Activated T-helper 1 cell treated with anti-CD3 and anti-CD28 coated beads, Interleukin-12 subunit alpha, Interleukin-12 subunit beta, Interleukin-2, Interleukin-4 antibody, amounts not matched to agents 30 ng/mL and 10 ng/mL and 1 ng/mL, durations not matched to agents 14 hours and 24 hours and 36 hours (primary cell): ENCODE measurements at regions of chr18 and their contacts with region 1.

Region 1: DNA sequence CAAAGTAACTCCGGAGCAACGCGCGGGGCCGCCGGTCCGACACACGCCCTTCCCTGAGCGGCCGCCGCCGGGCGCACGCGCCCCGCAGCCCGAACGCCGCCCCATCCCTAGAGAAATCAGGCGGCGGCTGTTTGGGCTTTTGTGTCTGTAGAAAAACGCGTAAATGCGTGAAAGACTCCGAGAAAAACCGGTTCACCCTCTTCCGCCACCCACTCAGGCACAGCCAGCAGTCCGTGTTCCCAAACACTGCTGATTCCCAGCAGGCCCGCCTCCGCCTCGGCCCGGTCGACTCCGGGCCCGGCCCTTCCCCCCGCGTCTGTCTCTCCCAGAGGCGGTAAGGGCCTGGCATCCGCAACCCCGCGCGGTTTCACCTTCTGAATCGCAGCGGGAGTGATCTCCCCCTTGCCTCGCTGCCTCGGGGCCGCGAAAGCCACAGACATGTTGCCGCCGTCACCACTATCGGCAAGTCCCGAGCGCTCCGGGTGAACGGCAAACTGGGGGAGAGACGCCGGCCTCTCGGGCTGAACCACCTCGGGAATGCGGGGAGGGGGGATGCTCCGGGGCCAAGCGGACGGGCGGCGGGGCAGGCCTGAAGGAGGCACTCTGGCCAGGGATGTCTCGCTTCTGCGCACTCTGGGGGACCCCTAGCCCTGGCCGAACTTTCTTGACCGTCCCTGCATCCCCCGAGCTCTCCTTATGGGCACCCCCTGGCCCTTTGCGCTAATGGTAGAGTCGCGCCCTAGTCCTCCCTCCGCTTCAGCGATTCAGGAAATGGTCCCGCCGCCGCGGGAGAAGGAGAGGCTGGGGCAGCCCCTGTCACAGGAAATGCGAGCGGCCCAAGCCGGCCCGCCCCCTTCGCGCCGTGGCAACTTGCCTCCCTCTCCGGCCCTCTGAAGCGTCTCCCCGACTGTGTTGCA is at the start of gene SS18:
- DNase-seq: peak; percentile 89
- H3K4me3 Mint-ChIP-seq: peak within 1 kb of the TSS; percentile 95
- H3K27ac Mint-ChIP-seq: peak within 1 kb of the TSS; percentile 95
- H3K4me1 Mint-ChIP-seq: peaks cover 33% of the 10 kb centered on the region
- H3K27me3 Mint-ChIP-seq: no peaks in the 10 kb centered on the region
- total RNA-seq, gene SS18: 64.4 and 72.4 TPM in 2 replicates

Region 2: DNA sequence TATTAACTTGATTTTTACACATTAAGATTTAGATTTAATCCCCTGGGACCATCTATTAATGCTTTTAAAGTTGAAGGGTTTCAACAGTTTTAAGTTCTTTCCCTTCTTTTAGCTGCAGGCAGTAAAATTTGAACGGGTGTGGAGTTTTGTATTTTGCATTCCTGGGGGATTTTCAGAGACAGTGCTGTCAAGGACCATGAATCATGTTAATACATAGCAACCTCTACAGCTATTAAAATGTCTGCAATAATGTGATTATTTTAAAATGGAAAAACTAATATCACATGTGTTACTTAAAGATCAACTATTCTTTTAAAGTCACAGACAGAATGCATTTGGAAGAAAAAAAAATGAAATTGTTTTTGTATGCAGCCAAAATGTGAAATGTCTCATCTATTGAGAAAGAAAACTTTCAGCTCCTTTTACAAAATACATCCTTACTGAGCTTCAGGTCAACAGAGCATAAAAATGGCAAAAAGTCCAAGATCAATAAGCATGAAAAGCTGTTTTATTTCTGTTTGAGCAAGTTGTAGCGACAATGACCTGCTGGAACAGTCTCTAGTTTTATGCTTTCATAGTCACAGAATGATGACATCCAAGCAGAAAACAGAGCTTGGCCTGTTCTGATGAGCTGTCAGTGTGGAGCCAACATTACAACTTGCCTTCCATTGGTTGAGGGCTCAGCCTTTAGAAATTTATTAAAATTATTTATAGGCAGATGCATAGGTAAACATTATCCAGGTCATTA is 716.8 kb before region 1 on chr18:
- intact Hi-C with region 1: no loop called
- DNase-seq: no peak
- H3K4me3 Mint-ChIP-seq: no peak overlapping the region
- H3K27ac Mint-ChIP-seq: no peak overlapping the region
- H3K4me1 Mint-ChIP-seq: no peaks in the 10 kb centered on the region
- H3K27me3 Mint-ChIP-seq: peaks cover 2% of the 10 kb centered on the region

Region 3: DNA sequence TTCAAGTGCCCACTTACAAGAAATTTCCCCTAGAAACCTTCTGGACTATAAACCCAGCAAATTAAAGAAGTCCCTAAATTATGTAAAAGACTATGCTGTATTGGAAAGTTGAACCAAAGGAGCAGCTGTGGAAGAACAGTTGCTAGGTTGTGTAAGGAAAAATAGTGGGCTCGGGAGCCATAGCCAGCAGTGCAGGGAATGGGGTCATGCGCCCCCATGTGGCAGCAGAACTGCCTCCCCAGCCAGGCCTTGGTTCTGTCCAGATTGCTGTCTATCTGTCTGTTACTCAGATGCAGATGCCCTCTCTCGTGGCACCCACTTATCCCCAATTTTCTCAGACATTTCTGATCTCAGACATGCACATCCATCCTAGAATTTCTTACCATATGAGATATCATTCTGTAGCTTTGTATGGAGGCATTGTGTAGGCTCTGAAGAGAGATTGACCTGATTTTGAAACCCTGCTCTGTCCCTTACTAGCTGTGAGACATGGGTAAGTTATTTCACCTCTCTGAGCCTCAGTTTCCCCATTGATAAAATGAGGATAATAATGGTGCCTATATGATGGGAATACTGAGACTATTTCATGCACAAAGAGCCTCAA is 258.3 kb before region 1 on chr18:
- intact Hi-C with region 1: no loop called
- DNase-seq: no peak
- H3K4me3 Mint-ChIP-seq: no peak overlapping the region
- H3K27ac Mint-ChIP-seq: no peak overlapping the region
- H3K4me1 Mint-ChIP-seq: no peaks in the 10 kb centered on the region
- H3K27me3 Mint-ChIP-seq: no peaks in the 10 kb centered on the region

Region 4: GRCh38 chr18:26021061-26021754 is 69.2 kb before region 1 on chr18:
- intact Hi-C with region 1: loop called (anchors 2 kb)
- DNase-seq: no peak
- H3K4me3 Mint-ChIP-seq: no peak overlapping the region
- H3K27ac Mint-ChIP-seq: no peak overlapping the region
- H3K4me1 Mint-ChIP-seq: peaks cover 7% of the 10 kb centered on the region
- H3K27me3 Mint-ChIP-seq: no peaks in the 10 kb centered on the region

Region 5: DNA sequence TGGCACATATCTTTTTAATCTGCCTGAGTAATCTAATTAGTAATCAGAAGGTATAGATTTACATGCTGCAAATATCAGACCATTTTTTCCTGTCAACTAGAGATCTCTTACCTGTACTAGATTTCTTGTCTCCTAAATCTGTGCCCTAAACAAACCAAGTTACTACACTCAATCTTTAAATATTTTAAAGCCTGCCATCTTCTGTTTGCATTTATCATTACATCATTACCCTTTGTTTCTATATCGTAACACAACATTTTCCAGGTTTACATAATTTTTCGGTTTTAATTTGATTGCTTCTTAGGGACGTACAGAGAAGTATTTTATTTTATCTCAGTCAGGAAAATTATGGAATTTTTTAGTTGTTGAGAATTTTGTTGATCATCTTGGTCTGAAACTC is 69.0 kb after region 1 on chr18:
- intact Hi-C with region 1: loop called (anchors 10 kb)
- DNase-seq: no peak
- H3K4me3 Mint-ChIP-seq: no peak overlapping the region
- H3K27ac Mint-ChIP-seq: no peak overlapping the region
- H3K4me1 Mint-ChIP-seq: no peaks in the 10 kb centered on the region
- H3K27me3 Mint-ChIP-seq: peaks cover 13% of the 10 kb centered on the region

Region 6: GRCh38 chr18:26215247-26215970 is 125.0 kb after region 1 on chr18:
- intact Hi-C with region 1: loop called (anchors 1 kb)
- DNase-seq: peak; percentile 30
- H3K4me3 Mint-ChIP-seq: peak overlapping the region; percentile 67
- H3K27ac Mint-ChIP-seq: peak overlapping the region; percentile 80
- H3K4me1 Mint-ChIP-seq: peaks cover 25% of the 10 kb centered on the region
- H3K27me3 Mint-ChIP-seq: peaks cover 4% of the 10 kb centered on the region

Region 7: GRCh38 chr18:26548429-26549262 is 458.3 kb after region 1 on chr18 and contains the start of gene KCTD1:
- intact Hi-C with region 1: loop called (anchors 2 kb)
- DNase-seq: peak; percentile 67
- H3K4me3 Mint-ChIP-seq: peak within 1 kb of the TSS; percentile 90
- H3K27ac Mint-ChIP-seq: peak within 1 kb of the TSS; percentile 80
- H3K4me1 Mint-ChIP-seq: peaks cover 14% of the 10 kb centered on the region
- H3K27me3 Mint-ChIP-seq: peaks cover 42% of the 10 kb centered on the region
- total RNA-seq, gene KCTD1: 5.3 and 5.5 TPM in 2 replicates

Region 8: GRCh38 chr18:26832302-26832701 is 741.9 kb after region 1 on chr18:
- intact Hi-C with region 1: no loop called
- DNase-seq: no peak
- H3K4me3 Mint-ChIP-seq: no peak overlapping the region
- H3K27ac Mint-ChIP-seq: no peak overlapping the region
- H3K4me1 Mint-ChIP-seq: no peaks in the 10 kb centered on the region
- H3K27me3 Mint-ChIP-seq: no peaks in the 10 kb centered on the region